Sigmoid colon (tissue), 7 donors: ENCODE measurements at regions of chr4 and their contacts with region 1.

Region 1: GRCh38 chr4:168710353-168710946 is 213.6 kb downstream of the PALLD start:
- DNase-seq: no peak
- H3K4me3 ChIP-seq: no peak overlapping the region
- H3K27ac ChIP-seq: peak overlapping the region; percentile 68 to 91 (median 83)
- H3K4me1 ChIP-seq: peaks cover 0 to 35% (median 28%) of the 10 kb centered on the region in 4 donors
- H3K27me3 ChIP-seq: no peaks in the 10 kb centered on the region
- CTCF ChIP-seq: peak; percentile 57 to 68 (median 64)
- EP300 ChIP-seq: no peak
- POLR2A ChIP-seq: no peak

Region 2: DNA sequence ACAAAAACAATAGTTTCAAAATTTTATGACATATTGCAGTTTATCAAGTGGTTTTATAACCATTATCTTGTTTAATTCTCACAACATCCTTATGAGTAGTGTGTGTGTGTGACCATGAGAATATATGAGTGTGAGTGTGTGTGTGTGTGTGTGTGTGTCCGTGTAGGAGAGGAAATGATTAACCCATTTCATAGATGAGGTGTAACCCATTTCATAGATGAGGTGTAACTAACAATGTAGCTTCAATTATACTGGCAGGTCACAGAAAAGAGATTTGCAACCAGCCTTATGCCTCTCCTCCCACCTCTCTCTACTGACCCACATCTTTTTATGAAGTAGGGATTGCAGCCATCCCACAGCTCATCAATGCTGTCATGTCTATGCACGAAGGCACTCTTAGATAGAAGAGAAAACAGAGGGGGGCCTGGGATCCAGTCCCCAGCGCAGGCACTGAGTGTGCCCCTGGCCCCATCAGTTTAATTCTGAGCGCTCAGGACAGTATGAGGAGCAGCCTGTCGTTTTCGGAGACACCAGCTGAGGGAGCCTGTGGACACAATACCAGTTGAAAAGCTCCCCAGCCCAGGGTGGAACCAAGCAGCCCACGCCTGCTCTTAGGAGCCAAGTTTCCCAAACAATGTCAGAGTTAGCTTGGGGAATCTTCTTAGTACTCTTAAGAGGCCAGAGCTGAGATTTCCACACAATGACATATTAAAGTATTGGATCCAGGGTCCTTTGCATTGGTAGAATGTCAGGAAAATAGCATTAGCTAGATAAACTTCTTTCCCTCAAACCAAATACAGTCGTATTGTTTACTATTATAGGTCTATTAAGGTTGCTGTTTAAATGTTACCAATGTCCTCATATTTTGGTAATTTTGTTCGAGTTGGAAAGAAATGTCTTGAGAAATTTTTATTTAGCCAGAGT is 125.0 kb before region 1 on chr4:
- intact Hi-C with region 1: loop called (anchors 5 kb)
- DNase-seq: peak; percentile 93
- H3K4me3 ChIP-seq: no peak overlapping the region
- H3K27ac ChIP-seq: peak overlapping the region in 2 of 4 donors; percentile 21 to 85
- H3K4me1 ChIP-seq: peaks cover 0 to 41% (median 29%) of the 10 kb centered on the region in 4 donors
- H3K27me3 ChIP-seq: no peaks in the 10 kb centered on the region
- CTCF ChIP-seq: peak; percentile 68 to 84 (median 74)
- EP300 ChIP-seq: no peak
- POLR2A ChIP-seq: no peak

Region 3: DNA sequence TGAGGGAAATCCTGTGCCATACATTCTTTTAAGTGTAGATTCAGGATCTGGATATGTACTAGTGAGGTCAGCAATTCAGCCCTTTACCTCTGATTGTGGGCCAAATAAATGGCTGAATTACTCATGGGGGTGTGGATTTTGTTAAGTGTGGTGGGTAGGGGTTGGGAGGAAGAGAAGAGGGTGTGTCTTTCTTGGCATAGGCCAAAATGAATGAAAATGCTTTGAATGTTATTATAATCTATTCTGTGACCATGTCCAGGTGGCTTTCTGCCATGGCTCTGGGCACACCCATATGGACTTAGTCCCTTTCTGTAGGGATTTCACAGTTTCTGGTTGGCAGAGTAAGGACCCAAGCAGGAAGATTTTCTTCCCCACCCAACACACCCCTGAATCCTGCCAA is 55.3 kb after region 1 on chr4:
- intact Hi-C with region 1: no loop called
- DNase-seq: no peak
- H3K4me3 ChIP-seq: no peak overlapping the region
- H3K27ac ChIP-seq: peak overlapping the region; percentile 33 to 74 (median 46)
- H3K4me1 ChIP-seq: peaks cover 0 to 36% (median 34%) of the 10 kb centered on the region in 4 donors
- H3K27me3 ChIP-seq: no peaks in the 10 kb centered on the region
- CTCF ChIP-seq: no peak
- EP300 ChIP-seq: no peak
- POLR2A ChIP-seq: no peak

Region 4: GRCh38 chr4:168815379-168816345 is 105.2 kb after region 1 on chr4:
- intact Hi-C with region 1: loop called (anchors 2 kb)
- DNase-seq: peak; percentile 70
- H3K4me3 ChIP-seq: peak overlapping the region in 3 of 4 donors; percentile 17 to 30 (median 28)
- H3K27ac ChIP-seq: peak overlapping the region; percentile 83 to 94 (median 86)
- H3K4me1 ChIP-seq: peaks cover 0 to 84% (median 65%) of the 10 kb centered on the region in 4 donors
- H3K27me3 ChIP-seq: no peaks in the 10 kb centered on the region
- CTCF ChIP-seq: no peak
- EP300 ChIP-seq: peak; percentile 74 to 97 (median 92)
- POLR2A ChIP-seq: no peak

Region 5: GRCh38 chr4:168877511-168878491 is 167.4 kb after region 1 on chr4:
- intact Hi-C with region 1: loop called (anchors 5 kb)
- DNase-seq: peak; percentile 72
- H3K4me3 ChIP-seq: peak overlapping the region; percentile 23 to 49 (median 43)
- H3K27ac ChIP-seq: peak overlapping the region; percentile 77 to 99 (median 88)
- H3K4me1 ChIP-seq: peaks cover 0 to 100% (median 94%) of the 10 kb centered on the region in 4 donors
- H3K27me3 ChIP-seq: no peaks in the 10 kb centered on the region
- CTCF ChIP-seq: no peak
- EP300 ChIP-seq: no peak
- POLR2A ChIP-seq: no peak

Region 6: GRCh38 chr4:168923526-168924194 is 213.2 kb after region 1 on chr4:
- intact Hi-C with region 1: loop called (anchors 2 kb)
- DNase-seq: no peak
- H3K4me3 ChIP-seq: no peak overlapping the region
- H3K27ac ChIP-seq: peak overlapping the region; percentile 34 to 50 (median 46)
- H3K4me1 ChIP-seq: peaks cover 0 to 30% (median 26%) of the 10 kb centered on the region in 4 donors
- H3K27me3 ChIP-seq: no peaks in the 10 kb centered on the region
- CTCF ChIP-seq: peak; percentile 64 to 74 (median 67)
- EP300 ChIP-seq: no peak
- POLR2A ChIP-seq: no peak